CD4-positive, alpha-beta T cell (primary cell): ENCODE measurements at regions of chr12 and their contacts with region 1.

Region 1: GRCh38 chr12:26119391-26119981 is 5.4 kb downstream of the BHLHE41 start:
- DNase-seq: peak in 2 of 14 experiments; percentile 30 to 44
- ATAC-seq: no peak
- H3K4me3 ChIP-seq: no peak overlapping the region
- H3K4me3 Mint-ChIP-seq: no peak overlapping the region
- H3K27ac ChIP-seq: no peak overlapping the region
- H3K27ac Mint-ChIP-seq: no peak overlapping the region
- H3K4me1 ChIP-seq: peaks cover 26% of the 10 kb centered on the region
- H3K4me1 Mint-ChIP-seq: peaks cover 24% of the 10 kb centered on the region
- H3K27me3 ChIP-seq: peaks cover 32 to 60% of the 10 kb centered on the region in 2 experiments
- H3K27me3 Mint-ChIP-seq: peaks cover 66% of the 10 kb centered on the region
- CTCF ChIP-seq: peak; percentile 48

Region 2: GRCh38 chr12:25997201-25997963 is 122.1 kb before region 1 on chr12:
- CTCF ChIA-PET with region 1: no interaction called
- POLR2A ChIA-PET with region 1: no interaction called
- intact Hi-C with region 1: no loop called
- DNase-seq: no peak
- ATAC-seq: no peak
- H3K4me3 ChIP-seq: no peak overlapping the region
- H3K4me3 Mint-ChIP-seq: no peak overlapping the region
- H3K27ac ChIP-seq: no peak overlapping the region
- H3K27ac Mint-ChIP-seq: no peak overlapping the region
- H3K4me1 ChIP-seq: no peaks in the 10 kb centered on the region
- H3K4me1 Mint-ChIP-seq: no peaks in the 10 kb centered on the region
- H3K27me3 ChIP-seq: no peaks in the 10 kb centered on the region
- H3K27me3 Mint-ChIP-seq: no peaks in the 10 kb centered on the region
- CTCF ChIP-seq: no peak

Region 3: GRCh38 chr12:26701604-26702215 is 582.2 kb after region 1 on chr12:
- CTCF ChIA-PET with region 1: no interaction called
- POLR2A ChIA-PET with region 1: no interaction called
- intact Hi-C with region 1: loop called in 1 of 2 experiments (anchors 1 kb)
- DNase-seq: peak in 3 of 14 experiments; percentile 40 to 48 (median 44)
- ATAC-seq: no peak
- H3K4me3 ChIP-seq: no peak overlapping the region
- H3K4me3 Mint-ChIP-seq: no peak overlapping the region
- H3K27ac ChIP-seq: no peak overlapping the region
- H3K27ac Mint-ChIP-seq: no peak overlapping the region
- H3K4me1 ChIP-seq: no peaks in the 10 kb centered on the region
- H3K4me1 Mint-ChIP-seq: no peaks in the 10 kb centered on the region
- H3K27me3 ChIP-seq: no peaks in the 10 kb centered on the region
- H3K27me3 Mint-ChIP-seq: no peaks in the 10 kb centered on the region
- CTCF ChIP-seq: peak; percentile 61